ENCODE measurements at regions of chr15 and their contacts with region 1.

Region 1: DNA sequence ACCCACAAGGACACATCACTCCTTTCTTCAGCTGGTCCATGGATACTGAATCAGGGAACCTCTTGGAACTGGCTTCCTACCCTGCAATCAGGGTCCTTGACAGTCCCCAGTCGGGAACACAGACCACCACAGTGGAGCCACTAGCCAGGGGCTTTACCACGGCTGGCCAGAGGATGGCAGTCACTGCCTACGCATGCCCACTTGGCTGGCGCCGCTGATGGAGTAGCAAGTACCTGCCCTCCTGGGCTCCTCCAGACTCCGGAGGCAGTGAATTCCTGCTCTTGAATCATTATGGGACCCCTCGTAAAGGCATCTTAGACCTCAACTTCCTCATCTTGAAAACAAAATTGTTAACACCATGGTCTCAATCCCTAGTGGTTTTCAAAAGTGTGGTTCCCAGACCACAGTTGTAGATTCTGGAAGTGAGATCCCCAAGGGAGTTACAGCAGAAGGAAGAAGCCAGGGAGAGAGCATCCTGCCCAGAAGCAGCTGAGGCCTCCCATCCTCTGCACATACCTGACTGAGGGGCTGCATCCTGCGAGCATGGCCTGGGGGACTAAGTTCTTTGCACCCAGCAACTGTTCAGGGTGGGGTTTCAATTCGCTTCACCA is 9.1 kb upstream of the SKIC8 start:
- DNase-seq: peak; percentile 84
- ATAC-seq: peak; percentile 90
- H3K4me3 ChIP-seq: no peak overlapping the region
- H3K27ac ChIP-seq: no peak overlapping the region
- H3K4me1 ChIP-seq: peaks cover 3% of the 10 kb centered on the region
- H3K27me3 ChIP-seq: peaks cover 20% of the 10 kb centered on the region
- CTCF ChIP-seq: peak; percentile 82

Region 2: DNA sequence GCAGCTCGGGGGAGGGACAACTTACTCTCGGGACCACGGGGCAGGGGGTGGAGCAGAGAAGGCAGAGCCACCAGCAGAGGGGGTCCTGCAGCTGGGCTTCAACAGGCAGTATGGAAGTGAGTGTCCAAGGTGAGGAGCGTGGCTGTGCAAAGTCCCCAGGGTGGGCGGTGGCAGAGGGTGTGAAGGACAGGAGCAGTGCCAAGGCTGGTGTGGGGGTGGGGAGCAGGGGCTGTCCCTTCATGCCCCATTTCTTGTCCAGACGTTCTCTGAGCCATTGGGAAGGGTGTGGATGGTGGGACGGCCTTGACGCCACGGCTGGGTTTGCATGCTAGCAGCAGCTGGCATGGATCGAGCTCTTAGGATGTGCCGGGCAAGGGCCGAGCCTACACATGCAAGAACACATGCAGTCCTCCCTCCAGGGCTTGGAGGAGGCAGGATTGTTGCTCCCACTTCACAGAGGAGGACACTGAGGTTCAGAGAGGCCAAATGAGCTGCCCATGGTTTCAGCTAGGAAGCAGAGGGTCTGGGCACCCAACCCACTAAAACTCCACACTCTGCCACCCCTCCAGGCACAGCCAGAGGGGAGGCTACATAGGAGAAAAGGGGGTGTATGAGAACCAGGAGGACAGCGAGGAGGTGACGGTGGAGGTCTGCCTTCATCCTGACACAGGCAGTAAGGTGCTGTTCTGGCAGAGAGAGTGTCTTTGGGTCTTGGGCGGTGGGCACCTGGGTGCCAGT is 324.6 kb before region 1 on chr15:
- intact Hi-C with region 1: no loop called
- DNase-seq: peak; percentile 61
- ATAC-seq: no peak
- H3K4me3 ChIP-seq: no peak overlapping the region
- H3K27ac ChIP-seq: no peak overlapping the region
- H3K4me1 ChIP-seq: no peaks in the 10 kb centered on the region
- H3K27me3 ChIP-seq: no peaks in the 10 kb centered on the region
- CTCF ChIP-seq: no peak

Region 3: DNA sequence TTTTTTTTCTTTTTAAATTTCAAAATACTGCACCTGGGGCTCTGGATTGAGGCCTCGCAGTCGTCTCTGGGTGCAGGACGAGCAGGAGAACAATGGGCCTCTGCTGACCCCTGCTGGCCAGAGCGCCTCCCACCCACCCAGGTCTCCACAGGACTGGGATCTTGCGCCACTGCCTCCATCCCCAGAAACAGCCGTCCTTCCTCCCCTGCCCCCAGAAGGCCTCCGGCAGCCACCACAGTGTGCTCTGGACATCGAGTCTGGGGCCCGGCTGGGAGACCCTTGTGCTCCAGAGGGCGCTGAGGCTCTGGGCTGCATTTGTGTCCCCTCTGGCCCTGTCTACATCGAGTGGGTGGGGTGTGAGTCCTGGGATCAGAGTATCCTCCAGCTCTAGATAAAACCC is 67.5 kb before region 1 on chr15:
- intact Hi-C with region 1: no loop called
- DNase-seq: peak; percentile 92
- ATAC-seq: peak; percentile 97
- H3K4me3 ChIP-seq: no peak overlapping the region
- H3K27ac ChIP-seq: no peak overlapping the region
- H3K4me1 ChIP-seq: no peaks in the 10 kb centered on the region
- H3K27me3 ChIP-seq: no peaks in the 10 kb centered on the region
- CTCF ChIP-seq: peak; percentile 87

Region 4: DNA sequence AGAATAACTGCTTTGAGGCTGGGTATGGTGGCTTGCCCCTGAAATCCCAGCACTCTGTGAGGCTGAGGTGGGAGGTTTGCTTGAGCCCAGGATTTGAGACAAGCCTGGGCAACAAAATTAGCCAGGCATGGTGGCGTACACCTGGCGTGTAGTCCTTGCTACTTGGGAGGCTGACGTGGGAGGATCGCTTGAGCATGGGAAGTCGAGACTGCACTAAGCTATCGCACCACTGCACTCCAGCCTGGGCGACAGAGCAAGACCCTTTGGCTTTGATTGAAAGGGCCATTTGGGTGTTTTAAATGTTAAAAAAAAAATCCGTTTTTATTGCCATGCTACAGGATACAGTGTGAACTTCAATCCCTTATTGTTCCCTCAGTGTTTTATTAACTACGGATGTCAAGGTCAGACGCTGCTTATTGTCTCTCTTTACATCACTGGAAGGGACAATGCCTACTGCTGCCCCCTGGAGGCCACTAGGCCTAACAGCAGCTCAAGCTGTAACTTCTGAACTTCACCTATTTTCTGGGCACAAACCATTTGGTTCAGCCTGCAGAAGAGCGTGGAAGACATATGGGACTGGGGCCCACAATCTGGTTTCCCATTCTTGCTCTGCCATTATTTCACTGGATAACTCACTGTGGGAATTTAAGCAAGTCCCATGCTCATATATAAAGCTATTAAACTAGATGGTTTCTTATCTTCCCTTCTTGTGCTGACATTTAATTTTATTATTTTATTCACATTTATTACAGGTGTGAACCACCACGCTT is 114.2 kb after region 1 on chr15:
- intact Hi-C with region 1: loop called (anchors 5 kb)
- DNase-seq: peak; percentile 74
- ATAC-seq: peak; percentile 95
- H3K4me3 ChIP-seq: no peak overlapping the region
- H3K27ac ChIP-seq: no peak overlapping the region
- H3K4me1 ChIP-seq: no peaks in the 10 kb centered on the region
- H3K27me3 ChIP-seq: no peaks in the 10 kb centered on the region
- CTCF ChIP-seq: peak; percentile 95

Region 5: DNA sequence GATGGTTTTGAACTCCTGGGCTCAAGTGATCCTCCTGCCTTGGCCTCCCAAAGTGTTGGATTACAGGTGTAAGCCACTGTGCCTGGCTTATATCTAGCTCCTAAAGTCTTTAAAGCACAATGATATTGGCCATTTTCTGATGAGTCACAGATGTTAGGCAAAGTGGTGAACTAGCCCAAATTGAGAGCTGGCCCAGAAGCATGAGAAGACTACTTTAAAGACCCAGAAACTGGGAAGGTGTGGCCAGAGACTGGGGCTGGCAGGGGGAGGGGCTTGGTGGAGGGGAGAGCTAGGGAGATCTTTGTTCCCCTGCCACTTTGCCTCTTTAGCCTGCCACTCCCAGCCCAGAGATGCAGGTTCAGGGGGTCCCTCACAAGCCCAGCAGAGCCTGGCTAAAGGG is 290.7 kb after region 1 on chr15:
- intact Hi-C with region 1: no loop called
- DNase-seq: no peak
- ATAC-seq: no peak
- H3K4me3 ChIP-seq: no peak overlapping the region
- H3K27ac ChIP-seq: no peak overlapping the region
- H3K4me1 ChIP-seq: no peaks in the 10 kb centered on the region
- H3K27me3 ChIP-seq: peaks cover 2% of the 10 kb centered on the region
- CTCF ChIP-seq: no peak

Measured in upper lobe of right lung (tissue), 1 donor.